Activated CD4-positive, alpha-beta T cell treated with anti-CD3 and anti-CD28 coated beads for 36 hours (primary cell): ENCODE measurements at regions of chr10 and their contacts with region 1.

Region 1: DNA sequence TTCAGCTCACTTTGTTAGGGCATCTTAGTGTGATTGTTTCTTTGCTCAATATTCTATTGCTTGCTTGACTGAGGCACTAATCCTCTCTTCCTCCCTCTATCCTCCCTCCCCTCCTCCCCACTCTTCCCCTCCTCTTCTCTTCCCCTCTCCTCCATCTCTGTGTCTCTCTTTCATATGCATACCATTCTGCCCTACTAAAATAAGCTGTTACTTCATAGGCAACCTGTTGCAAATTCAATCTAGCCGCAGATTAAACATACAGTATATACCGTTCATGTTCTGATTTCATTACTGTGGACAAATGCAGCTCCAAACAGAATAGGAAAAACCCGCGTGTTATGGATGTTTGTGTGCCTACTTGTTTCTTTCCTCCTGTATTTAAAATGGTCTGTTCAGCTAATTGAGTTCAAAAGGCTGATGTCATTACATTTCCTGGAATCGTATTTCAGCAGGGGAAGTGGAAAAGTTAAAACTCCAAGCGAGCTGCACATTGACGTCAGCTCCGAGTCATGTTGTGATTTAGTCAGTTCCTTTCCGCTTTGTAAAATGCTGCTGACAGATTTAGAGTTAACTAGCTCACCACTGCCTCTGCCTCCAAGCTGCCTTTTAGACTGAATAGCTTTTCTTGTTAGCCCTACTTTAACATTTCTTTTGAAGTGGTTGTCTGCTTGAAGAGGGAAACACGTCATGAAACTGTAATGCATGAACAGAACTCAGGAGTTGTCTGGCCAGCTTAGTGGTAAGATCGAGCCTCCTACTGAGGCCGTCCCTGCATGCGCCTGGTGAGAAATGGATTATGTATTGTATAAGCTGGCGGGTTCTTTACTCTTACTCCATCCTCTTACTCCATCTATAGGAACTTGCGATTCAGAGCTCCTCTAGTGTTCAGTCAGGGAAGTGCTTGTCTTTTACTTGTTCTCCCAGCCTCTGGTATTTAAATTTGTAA is 69.0 kb downstream of the CREM start:
- DNase-seq: peak; percentile 89
- ATAC-seq: peak; percentile 91
- H3K4me3 Mint-ChIP-seq: peak overlapping the region; percentile 79
- H3K27ac Mint-ChIP-seq: peak overlapping the region; percentile 98
- H3K4me1 Mint-ChIP-seq: peaks cover 50% of the 10 kb centered on the region
- H3K27me3 Mint-ChIP-seq: no peaks in the 10 kb centered on the region

Region 2: GRCh38 chr10:35090162-35090954 is 105.3 kb before region 1 on chr10 and contains the start of gene CUL2:
- CTCF ChIA-PET with region 1: interaction called, 4 read pairs
- POLR2A ChIA-PET with region 1: no interaction called
- intact Hi-C with region 1: loop called (anchors 1 kb)
- DNase-seq: peak; percentile 94
- ATAC-seq: peak; percentile 96
- H3K4me3 Mint-ChIP-seq: peak within 1 kb of the TSS; percentile 93
- H3K27ac Mint-ChIP-seq: peak within 1 kb of the TSS; percentile 96
- H3K4me1 Mint-ChIP-seq: peaks cover 45% of the 10 kb centered on the region
- H3K27me3 Mint-ChIP-seq: no peaks in the 10 kb centered on the region
- total RNA-seq, gene CUL2: 42.7 to 45.3 TPM

Region 3: DNA sequence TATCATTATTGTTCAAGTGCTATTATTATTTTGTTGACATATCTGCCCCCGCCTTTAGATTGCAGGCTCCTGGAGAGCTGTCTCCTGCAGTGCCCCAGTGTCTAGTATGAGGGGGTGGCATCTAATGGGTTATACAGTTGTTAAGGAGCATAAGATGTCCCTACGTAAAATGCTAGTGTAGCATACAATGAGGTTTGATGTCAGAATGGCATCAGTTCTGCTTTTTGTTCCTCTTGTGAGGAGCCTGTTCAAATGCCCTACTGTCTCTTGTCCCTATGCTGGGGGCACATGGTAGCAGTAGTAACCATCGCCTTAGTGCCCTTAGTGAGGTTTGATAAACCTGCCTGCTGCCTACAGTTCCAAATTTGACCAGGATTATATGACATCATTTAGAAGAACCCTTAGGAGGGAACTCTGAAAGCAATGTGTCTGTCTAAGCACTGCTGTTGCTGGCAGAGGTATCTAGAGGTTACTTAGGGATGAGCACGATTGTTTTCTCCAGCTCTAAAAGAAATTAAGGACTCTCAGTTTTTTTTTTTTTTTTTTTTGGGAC is 59.3 kb before region 1 on chr10:
- CTCF ChIA-PET with region 1: interaction called, 17 read pairs
- POLR2A ChIA-PET with region 1: interaction called, 3 read pairs
- intact Hi-C with region 1: loop called in 1 of 2 experiments (anchors 1 kb)
- DNase-seq: no peak
- ATAC-seq: no peak
- H3K4me3 Mint-ChIP-seq: no peak overlapping the region
- H3K27ac Mint-ChIP-seq: peak overlapping the region; percentile 37
- H3K4me1 Mint-ChIP-seq: peaks cover 37% of the 10 kb centered on the region
- H3K27me3 Mint-ChIP-seq: no peaks in the 10 kb centered on the region

Region 4: GRCh38 chr10:35178331-35178730 is 17.3 kb before region 1 on chr10:
- CTCF ChIA-PET with region 1: interaction called, 19 read pairs
- POLR2A ChIA-PET with region 1: interaction called, 3 read pairs
- intact Hi-C with region 1: loop called in 1 of 2 experiments (anchors 2 kb)
- DNase-seq: no peak
- ATAC-seq: no peak
- H3K4me3 Mint-ChIP-seq: no peak overlapping the region
- H3K27ac Mint-ChIP-seq: no peak overlapping the region
- H3K4me1 Mint-ChIP-seq: no peaks in the 10 kb centered on the region
- H3K27me3 Mint-ChIP-seq: no peaks in the 10 kb centered on the region

Region 5: GRCh38 chr10:35336084-35336831 is 140.6 kb after region 1 on chr10 and contains the start of gene CCNY:
- CTCF ChIA-PET with region 1: interaction called, 8 read pairs
- POLR2A ChIA-PET with region 1: interaction called, 6 read pairs
- intact Hi-C with region 1: loop called (anchors 1 to 5 kb)
- DNase-seq: peak; percentile 90
- ATAC-seq: peak; percentile 59
- H3K4me3 Mint-ChIP-seq: peak within 1 kb of the TSS; percentile 89
- H3K27ac Mint-ChIP-seq: peak within 1 kb of the TSS; percentile 90
- H3K4me1 Mint-ChIP-seq: peaks cover 71% of the 10 kb centered on the region
- H3K27me3 Mint-ChIP-seq: no peaks in the 10 kb centered on the region
- total RNA-seq, gene CCNY: 49.4 to 54.0 TPM